ENCODE measurements at regions of chr3 and their contacts with region 1.

Region 1: DNA sequence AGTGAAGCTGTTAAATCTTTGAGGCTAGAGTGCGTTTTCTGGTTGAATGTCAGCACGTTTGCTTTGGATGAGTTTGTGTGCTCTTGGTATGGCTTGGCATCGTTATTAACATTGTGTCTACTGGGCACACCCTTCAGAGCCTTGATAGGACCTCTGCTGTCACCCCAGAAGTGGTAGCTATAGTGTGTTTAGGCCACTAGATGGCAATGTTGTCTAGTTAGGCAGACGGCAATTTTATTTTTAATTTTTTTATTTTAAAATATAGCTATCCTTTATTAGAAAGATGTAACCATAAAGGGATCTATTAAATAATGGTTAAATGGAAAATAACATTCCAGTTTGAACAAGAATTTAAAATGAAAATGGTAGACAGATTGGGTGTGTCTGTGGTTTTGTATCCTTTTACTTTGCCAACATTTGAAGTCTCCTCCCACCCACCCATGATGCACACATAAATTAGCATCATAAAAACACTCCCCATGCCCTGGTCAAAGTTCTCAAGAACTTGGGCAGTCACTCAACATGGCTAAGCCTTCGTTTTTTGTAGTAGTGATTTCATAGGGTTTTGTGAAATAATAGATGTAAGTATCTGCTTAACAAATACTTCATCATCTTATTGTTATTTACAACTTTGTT is 200.7 kb downstream of the KCNH8 start:
- DNase-seq: no peak
- H3K4me3 Mint-ChIP-seq: no peak overlapping the region
- H3K27ac Mint-ChIP-seq: no peak overlapping the region
- H3K4me1 Mint-ChIP-seq: no peaks in the 10 kb centered on the region
- H3K27me3 Mint-ChIP-seq: no peaks in the 10 kb centered on the region

Region 2: DNA sequence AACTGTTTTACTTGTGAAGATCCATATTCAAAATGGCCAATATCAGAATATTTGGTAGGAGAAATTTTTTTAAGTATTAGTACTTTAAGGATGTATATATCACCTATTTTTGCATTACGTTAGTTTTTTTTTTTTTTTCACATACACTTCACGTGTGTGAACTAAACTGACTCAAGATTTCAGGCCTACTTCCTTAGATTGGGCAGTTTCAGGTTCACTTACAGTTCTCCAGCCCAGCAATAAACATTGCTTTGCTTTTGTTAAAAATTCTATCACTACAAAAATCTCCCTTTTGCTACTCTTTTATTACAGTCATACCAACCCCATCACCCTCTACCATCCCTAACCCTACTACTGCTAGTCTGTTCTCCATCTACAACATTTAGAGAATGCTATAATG is 17.1 kb before region 1 on chr3:
- CTCF ChIA-PET with region 1: no interaction called
- POLR2A ChIA-PET with region 1: no interaction called
- DNase-seq: no peak
- H3K4me3 Mint-ChIP-seq: no peak overlapping the region
- H3K27ac Mint-ChIP-seq: no peak overlapping the region
- H3K4me1 Mint-ChIP-seq: no peaks in the 10 kb centered on the region
- H3K27me3 Mint-ChIP-seq: no peaks in the 10 kb centered on the region

Region 3: GRCh38 chr3:19866751-19867347 is 517.8 kb after region 1 on chr3:
- CTCF ChIA-PET with region 1: interaction called, 32 read pairs
- POLR2A ChIA-PET with region 1: no interaction called
- DNase-seq: peak; percentile 22
- H3K4me3 Mint-ChIP-seq: no peak overlapping the region
- H3K27ac Mint-ChIP-seq: no peak overlapping the region
- H3K4me1 Mint-ChIP-seq: no peaks in the 10 kb centered on the region
- H3K27me3 Mint-ChIP-seq: peaks cover 12% of the 10 kb centered on the region

Measured in activated CD4-positive, alpha-beta memory T cell treated with anti-CD3 and anti-CD28 coated beads, Interleukin-2, amount 10 ng/mL, durations not matched to agents 7 days and 5 days (primary cell).